Activated B cell treated with CpG ODN at 0.5 μM for 24 hours (primary cell): ENCODE measurements at regions of chr6 and their contacts with region 1.

Region 1: GRCh38 chr6:113994918-113995342 is 24.0 kb upstream of the HDAC2 start:
- DNase-seq: no peak
- ATAC-seq: no peak
- H3K4me3 Mint-ChIP-seq: no peak overlapping the region
- H3K27ac Mint-ChIP-seq: no peak overlapping the region
- H3K4me1 Mint-ChIP-seq: no peaks in the 10 kb centered on the region
- H3K27me3 Mint-ChIP-seq: peaks cover 14% of the 10 kb centered on the region
- CTCF ChIP-seq: no peak

Region 2: DNA sequence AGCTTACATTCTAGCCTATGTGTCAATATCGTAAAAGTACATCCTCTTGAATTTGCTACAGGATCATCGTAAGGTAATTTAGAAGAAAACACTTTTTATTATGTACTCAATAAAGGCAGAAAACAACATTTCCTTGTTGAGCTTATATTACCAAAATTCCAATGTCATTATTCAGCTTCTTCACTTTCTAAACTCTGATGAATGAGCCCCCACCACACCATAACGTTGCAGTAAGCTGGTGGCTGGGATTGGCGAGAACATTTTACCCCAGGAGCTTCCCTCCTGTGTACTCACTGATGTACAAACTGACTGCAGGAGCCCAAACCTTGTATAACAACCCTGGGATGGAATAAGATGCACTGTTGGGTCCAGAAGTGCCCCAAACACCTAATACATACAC is 375.9 kb before region 1 on chr6:
- CTCF ChIA-PET with region 1: no interaction called
- POLR2A ChIA-PET with region 1: interaction called, 12 read pairs
- intact Hi-C with region 1: no loop called
- DNase-seq: no peak
- ATAC-seq: no peak
- H3K4me3 Mint-ChIP-seq: no peak overlapping the region
- H3K27ac Mint-ChIP-seq: no peak overlapping the region
- H3K4me1 Mint-ChIP-seq: peaks cover 20% of the 10 kb centered on the region
- H3K27me3 Mint-ChIP-seq: no peaks in the 10 kb centered on the region
- CTCF ChIP-seq: no peak

Region 3: GRCh38 chr6:113842153-113842552 is 152.8 kb before region 1 on chr6:
- CTCF ChIA-PET with region 1: no interaction called
- POLR2A ChIA-PET with region 1: no interaction called
- intact Hi-C with region 1: no loop called
- DNase-seq: no peak
- ATAC-seq: no peak
- H3K4me3 Mint-ChIP-seq: no peak overlapping the region
- H3K27ac Mint-ChIP-seq: no peak overlapping the region
- H3K4me1 Mint-ChIP-seq: no peaks in the 10 kb centered on the region
- H3K27me3 Mint-ChIP-seq: no peaks in the 10 kb centered on the region
- CTCF ChIP-seq: no peak

Region 4: DNA sequence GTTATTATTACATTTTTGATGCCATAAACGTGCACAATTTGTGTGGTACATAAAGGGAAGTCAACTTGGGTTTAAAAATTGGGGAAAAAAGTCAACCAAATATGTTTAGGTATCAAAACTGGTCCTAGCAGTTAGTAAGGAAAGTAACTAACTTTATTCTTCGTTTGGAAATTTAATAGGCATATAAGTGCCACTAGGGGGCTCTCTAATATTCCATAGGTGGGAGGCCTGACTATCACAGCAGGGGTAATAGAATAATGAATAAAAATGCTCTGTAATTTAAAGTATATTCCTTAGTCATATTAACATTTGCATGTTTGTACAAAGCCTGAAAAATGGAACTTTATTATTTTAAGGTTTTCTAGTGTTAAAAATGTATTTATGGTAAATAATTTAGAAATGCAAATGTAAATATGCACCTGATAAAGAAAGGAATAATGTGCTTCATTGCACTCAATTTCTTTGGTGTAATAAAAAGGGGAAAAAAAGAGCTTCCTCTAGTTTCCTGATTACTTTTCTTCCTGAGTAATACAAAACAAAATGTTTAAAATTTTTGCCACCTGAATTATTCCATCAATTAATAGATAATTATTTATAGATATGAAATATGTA is 101.7 kb after region 1 on chr6:
- CTCF ChIA-PET with region 1: no interaction called
- POLR2A ChIA-PET with region 1: no interaction called
- intact Hi-C with region 1: no loop called
- DNase-seq: no peak
- ATAC-seq: no peak
- H3K4me3 Mint-ChIP-seq: no peak overlapping the region
- H3K27ac Mint-ChIP-seq: no peak overlapping the region
- H3K4me1 Mint-ChIP-seq: no peaks in the 10 kb centered on the region
- H3K27me3 Mint-ChIP-seq: peaks cover 2% of the 10 kb centered on the region
- CTCF ChIP-seq: peak; percentile 87